ENCODE measurements at regions of chr20 and their contacts with region 1.

Region 1: DNA sequence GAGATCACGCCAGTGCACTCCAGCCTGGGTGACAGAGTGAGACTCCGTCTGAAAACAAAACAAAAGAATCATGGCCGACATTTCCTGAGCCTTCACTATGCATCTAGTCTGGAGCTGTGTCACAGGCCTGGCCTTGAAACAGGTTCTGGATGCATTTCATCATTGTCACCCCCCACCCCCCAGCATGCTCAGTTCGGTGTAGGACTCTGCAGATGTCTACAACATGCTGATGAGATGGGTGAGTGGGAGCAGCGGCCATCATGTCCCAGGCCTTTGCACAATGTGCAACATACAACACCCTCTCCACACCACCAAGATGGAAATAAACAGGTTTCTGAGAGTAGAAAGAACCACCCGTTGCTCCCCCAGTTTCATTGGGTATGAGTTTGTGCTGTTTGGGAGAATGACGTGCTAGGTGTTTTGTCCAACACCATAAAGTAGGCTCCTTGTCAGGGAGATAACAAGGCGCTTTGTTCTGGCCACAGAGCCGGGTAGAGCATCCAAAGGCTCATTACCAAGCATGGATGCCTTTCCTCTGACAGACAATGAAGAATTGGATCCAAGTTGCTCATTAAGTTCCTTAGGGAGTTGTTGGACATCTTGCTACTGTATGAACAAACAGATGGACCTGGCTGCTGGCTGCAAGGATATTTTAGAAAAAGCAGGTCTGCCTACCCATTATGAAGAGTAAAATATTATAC is 22.1 kb downstream of the SNHG17 start:
- DNase-seq: no peak
- H3K4me3 ChIP-seq: no peak overlapping the region
- H3K27ac ChIP-seq: no peak overlapping the region
- H3K4me1 ChIP-seq: no peaks in the 10 kb centered on the region
- H3K27me3 ChIP-seq: no peaks in the 10 kb centered on the region
- CTCF ChIP-seq: no peak
- EP300 ChIP-seq: no peak
- RAD21 ChIP-seq: no peak

Region 2: GRCh38 chr20:38229376-38230252 is 183.4 kb before region 1 on chr20:
- CTCF ChIA-PET with region 1: interaction called, 37 read pairs
- POLR2A ChIA-PET with region 1: no interaction called
- DNase-seq: peak; percentile 70
- H3K4me3 ChIP-seq: no peak overlapping the region; a peak in 1 of 4 replicates
- H3K27ac ChIP-seq: no peak overlapping the region
- H3K4me1 ChIP-seq: peaks cover 0 to 7% of the 10 kb centered on the region in 2 experiments; a peak in 1 of 4 replicates
- H3K27me3 ChIP-seq: no peaks in the 10 kb centered on the region
- CTCF ChIP-seq: peak; percentile 65
- EP300 ChIP-seq: no peak
- RAD21 ChIP-seq: peak; percentile 62

Region 3: GRCh38 chr20:38239441-38239840 is 173.6 kb before region 1 on chr20:
- CTCF ChIA-PET with region 1: interaction called, 11 read pairs
- POLR2A ChIA-PET with region 1: no interaction called
- DNase-seq: no peak
- H3K4me3 ChIP-seq: no peak overlapping the region
- H3K27ac ChIP-seq: no peak overlapping the region
- H3K4me1 ChIP-seq: no peaks in the 10 kb centered on the region
- H3K27me3 ChIP-seq: no peaks in the 10 kb centered on the region
- CTCF ChIP-seq: no peak
- EP300 ChIP-seq: no peak
- RAD21 ChIP-seq: no peak

Region 4: GRCh38 chr20:38337561-38338140 is 75.4 kb before region 1 on chr20:
- CTCF ChIA-PET with region 1: interaction called, 23 read pairs
- POLR2A ChIA-PET with region 1: no interaction called
- DNase-seq: peak; percentile 30
- H3K4me3 ChIP-seq: peak overlapping the region in 1 of 2 experiments; percentile 6; a peak in 1 of 4 replicates
- H3K27ac ChIP-seq: no peak overlapping the region
- H3K4me1 ChIP-seq: no peaks in the 10 kb centered on the region
- H3K27me3 ChIP-seq: peaks cover 4% of the 10 kb centered on the region; the same call in 1 of the 2 replicates
- CTCF ChIP-seq: no peak
- EP300 ChIP-seq: no peak
- RAD21 ChIP-seq: 0 out of 2 replicates have a peak, but pooled peaks have one; percentile 17

Region 5: DNA sequence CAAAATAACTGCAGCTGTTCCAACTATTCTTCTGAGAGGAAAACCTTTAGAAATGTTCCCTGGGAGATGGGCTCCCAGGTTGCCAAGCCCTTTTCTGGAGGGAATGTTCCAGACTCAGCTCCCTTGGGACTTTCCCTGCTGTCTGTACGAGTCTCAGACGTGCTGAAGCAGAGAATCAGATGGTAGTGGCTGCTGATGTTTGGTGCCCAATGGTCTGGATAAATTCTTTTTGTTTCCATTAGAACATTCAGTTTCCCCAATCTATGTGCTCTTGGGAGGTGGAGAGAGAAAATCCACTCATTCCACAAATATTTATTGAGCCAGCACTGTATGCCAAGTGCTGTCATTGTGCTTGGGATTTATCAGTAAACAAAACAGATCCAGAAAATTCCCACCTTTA is 17.9 kb before region 1 on chr20:
- CTCF ChIA-PET with region 1: interaction called, 23 read pairs
- POLR2A ChIA-PET with region 1: no interaction called
- DNase-seq: no peak
- H3K4me3 ChIP-seq: no peak overlapping the region
- H3K27ac ChIP-seq: no peak overlapping the region
- H3K4me1 ChIP-seq: no peaks in the 10 kb centered on the region; a peak in 2 of 4 replicates
- H3K27me3 ChIP-seq: no peaks in the 10 kb centered on the region; the same call in 1 of the 2 replicates
- CTCF ChIP-seq: no peak
- EP300 ChIP-seq: no peak
- RAD21 ChIP-seq: no peak